Lower leg skin (tissue), 4 donors: ENCODE measurements at regions of chr3 and their contacts with region 1.

Region 1: GRCh38 chr3:43223670-43224364 is 62.5 kb upstream of the SNRK start:
- DNase-seq: no peak
- H3K4me3 ChIP-seq: no peak overlapping the region
- CTCF ChIP-seq: no peak
- POLR2A ChIP-seq: no peak

Region 2: GRCh38 chr3:43363621-43364266 is 139.9 kb after region 1 on chr3:
- intact Hi-C with region 1: loop called (anchors 10 kb)
- DNase-seq: no peak
- H3K4me3 ChIP-seq: no peak overlapping the region
- CTCF ChIP-seq: no peak
- POLR2A ChIP-seq: no peak

Region 3: GRCh38 chr3:43690400-43691119 is 466.7 kb after region 1 on chr3 and contains the start of gene ABHD5:
- intact Hi-C with region 1: no loop called
- DNase-seq: peak; percentile 83 to 96
- H3K4me3 ChIP-seq: peak within 1 kb of the TSS; percentile 84
- CTCF ChIP-seq: no peak
- POLR2A ChIP-seq: peak in 1 of 2 donors; percentile 99
- total RNA-seq, gene ABHD5: 109 to 132 (median 118) TPM

Region 4: DNA sequence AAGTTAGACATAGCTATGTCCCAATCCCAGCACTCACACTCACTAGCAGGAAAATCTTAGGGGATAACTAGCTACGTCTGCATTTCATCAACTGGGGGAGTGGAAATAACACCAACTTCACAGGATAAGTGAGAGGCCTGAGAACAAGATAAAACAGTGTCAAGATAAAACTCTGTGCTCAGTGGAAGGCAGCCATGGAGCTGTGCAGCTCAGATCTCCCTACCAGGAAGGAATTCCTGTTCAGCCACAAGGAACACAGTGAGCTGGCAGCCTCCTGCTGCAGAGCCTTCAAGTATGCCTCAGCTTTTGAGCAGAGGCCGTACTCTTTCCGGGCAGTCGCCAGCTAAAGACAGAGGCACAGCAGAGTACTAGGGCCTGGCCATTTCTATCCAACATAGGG is 902.1 kb after region 1 on chr3:
- intact Hi-C with region 1: no loop called
- DNase-seq: no peak
- H3K4me3 ChIP-seq: no peak overlapping the region
- CTCF ChIP-seq: no peak
- POLR2A ChIP-seq: no peak